ENCODE measurements at regions of chr6 and their contacts with region 1.

Region 1: DNA sequence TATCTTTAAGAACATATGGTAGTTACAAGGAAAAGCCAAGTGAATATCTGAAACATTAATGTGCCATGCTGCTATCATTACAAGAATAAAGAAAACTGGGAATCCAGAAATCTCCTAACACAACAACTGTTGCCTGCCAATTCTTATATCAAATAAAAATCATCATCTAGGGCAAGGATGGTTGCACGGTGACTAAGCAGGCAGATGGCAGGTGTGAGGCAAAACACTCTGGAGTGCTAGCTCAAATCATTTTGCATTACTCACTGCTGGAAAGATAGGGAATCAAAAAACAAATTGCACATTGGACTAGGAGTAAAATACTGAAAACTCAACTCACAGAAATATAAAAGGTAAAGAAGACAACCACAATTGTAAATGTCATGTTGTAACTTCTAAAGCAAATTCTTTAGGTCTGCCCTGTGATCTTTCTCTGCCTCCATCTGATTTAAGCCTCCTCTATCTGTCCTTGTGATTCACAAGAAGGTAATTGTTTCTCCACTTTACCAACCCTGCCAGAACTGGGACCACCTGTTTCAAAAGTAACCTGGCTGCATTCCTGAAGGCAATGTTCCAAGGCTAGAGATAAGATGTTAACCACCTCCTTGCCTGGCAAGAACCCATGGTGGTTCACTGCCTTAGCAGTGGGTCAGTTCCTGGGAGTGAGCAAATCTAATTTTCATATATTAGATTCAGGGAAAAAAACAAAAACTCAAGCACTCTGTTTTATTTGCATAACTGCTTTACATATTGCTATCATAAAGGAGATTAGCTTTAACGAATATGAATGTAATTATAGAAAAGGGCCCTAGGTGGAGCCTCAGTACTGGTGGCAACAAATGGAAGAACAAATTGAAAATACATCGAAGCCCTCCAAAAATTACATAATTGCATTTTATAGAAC is 33.1 kb upstream of the LCA5 start:
- DNase-seq: peak; percentile 72
- ATAC-seq: peak; percentile 86
- H3K4me3 ChIP-seq: no peak overlapping the region
- H3K27ac ChIP-seq: no peak overlapping the region
- H3K4me1 ChIP-seq: no peaks in the 10 kb centered on the region; the same call in 1 of the 2 replicates
- H3K27me3 ChIP-seq: no peaks in the 10 kb centered on the region
- CTCF ChIP-seq: peak; percentile 75
- POLR2A ChIP-seq: no peak
- RAD21 ChIP-seq: peak; percentile 77

Region 2: GRCh38 chr6:79544939-79545450 is 25.4 kb before region 1 on chr6:
- CTCF ChIA-PET with region 1: no interaction called
- POLR2A ChIA-PET with region 1: no interaction called
- dilution Hi-C with region 1: no loop called
- in situ Hi-C with region 1: no loop called
- intact Hi-C with region 1: no loop called
- DNase-seq: peak; percentile 99
- ATAC-seq: peak; percentile 98
- H3K4me3 ChIP-seq: no peak overlapping the region
- H3K27ac ChIP-seq: peak overlapping the region; percentile 30; the same call in 1 of the 2 replicates
- H3K4me1 ChIP-seq: peaks cover 8% of the 10 kb centered on the region
- H3K27me3 ChIP-seq: no peaks in the 10 kb centered on the region
- CTCF ChIP-seq: peak; percentile 63
- POLR2A ChIP-seq: 0 out of 2 replicates have a peak, but pooled peaks have one; percentile 42
- RAD21 ChIP-seq: peak; percentile 59

Region 3: DNA sequence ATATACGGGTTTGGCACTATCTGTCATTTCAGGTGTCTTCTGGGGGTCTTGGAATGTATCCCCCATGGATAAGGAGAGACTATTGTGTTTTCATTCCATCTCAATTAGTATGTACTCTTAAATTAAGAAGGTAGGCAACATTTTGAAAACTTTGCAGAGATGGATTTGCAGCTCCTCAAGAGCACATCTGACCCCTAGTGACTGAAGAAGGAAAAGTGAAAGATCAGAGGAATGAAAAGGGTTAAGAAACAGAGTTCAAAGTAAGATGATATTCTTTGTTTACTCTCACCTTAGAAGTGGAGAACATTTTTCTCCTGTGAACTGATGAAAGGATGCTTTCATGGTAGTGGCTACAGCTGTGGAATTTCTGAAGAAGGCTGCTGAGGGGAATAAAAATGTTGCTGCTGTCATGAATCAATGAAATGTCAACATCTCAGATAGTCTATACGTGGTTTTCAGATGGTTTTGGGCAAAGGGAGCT is 102.3 kb after region 1 on chr6:
- CTCF ChIA-PET with region 1: interaction called, 19 read pairs
- POLR2A ChIA-PET with region 1: no interaction called
- dilution Hi-C with region 1: no loop called
- in situ Hi-C with region 1: loop called (anchors 10 kb)
- intact Hi-C with region 1: loop called (anchors 1 kb)
- DNase-seq: peak; percentile 45
- ATAC-seq: peak; percentile 61
- H3K4me3 ChIP-seq: no peak overlapping the region
- H3K27ac ChIP-seq: no peak overlapping the region
- H3K4me1 ChIP-seq: peaks cover 5% of the 10 kb centered on the region
- H3K27me3 ChIP-seq: no peaks in the 10 kb centered on the region
- CTCF ChIP-seq: peak; percentile 58
- POLR2A ChIP-seq: no peak
- RAD21 ChIP-seq: peak; percentile 73

Region 4: GRCh38 chr6:79713701-79714322 is 143.4 kb after region 1 on chr6:
- CTCF ChIA-PET with region 1: interaction called, 4 read pairs
- POLR2A ChIA-PET with region 1: no interaction called
- dilution Hi-C with region 1: no loop called
- in situ Hi-C with region 1: no loop called
- intact Hi-C with region 1: loop called (anchors 1 kb)
- DNase-seq: peak; percentile 50
- ATAC-seq: peak; percentile 81
- H3K4me3 ChIP-seq: no peak overlapping the region
- H3K27ac ChIP-seq: no peak overlapping the region
- H3K4me1 ChIP-seq: no peaks in the 10 kb centered on the region
- H3K27me3 ChIP-seq: no peaks in the 10 kb centered on the region; the same call in 1 of the 2 replicates
- CTCF ChIP-seq: peak; percentile 65
- POLR2A ChIP-seq: no peak
- RAD21 ChIP-seq: peak; percentile 74

Region 5: GRCh38 chr6:79813854-79814709 is 243.7 kb after region 1 on chr6:
- CTCF ChIA-PET with region 1: no interaction called
- POLR2A ChIA-PET with region 1: no interaction called
- dilution Hi-C with region 1: no loop called
- in situ Hi-C with region 1: no loop called
- intact Hi-C with region 1: loop called (anchors 1 kb)
- DNase-seq: peak; percentile 61
- ATAC-seq: peak; percentile 91
- H3K4me3 ChIP-seq: no peak overlapping the region
- H3K27ac ChIP-seq: no peak overlapping the region
- H3K4me1 ChIP-seq: no peaks in the 10 kb centered on the region
- H3K27me3 ChIP-seq: no peaks in the 10 kb centered on the region
- CTCF ChIP-seq: peak; percentile 78
- POLR2A ChIP-seq: no peak
- RAD21 ChIP-seq: peak; percentile 60

Region 6: DNA sequence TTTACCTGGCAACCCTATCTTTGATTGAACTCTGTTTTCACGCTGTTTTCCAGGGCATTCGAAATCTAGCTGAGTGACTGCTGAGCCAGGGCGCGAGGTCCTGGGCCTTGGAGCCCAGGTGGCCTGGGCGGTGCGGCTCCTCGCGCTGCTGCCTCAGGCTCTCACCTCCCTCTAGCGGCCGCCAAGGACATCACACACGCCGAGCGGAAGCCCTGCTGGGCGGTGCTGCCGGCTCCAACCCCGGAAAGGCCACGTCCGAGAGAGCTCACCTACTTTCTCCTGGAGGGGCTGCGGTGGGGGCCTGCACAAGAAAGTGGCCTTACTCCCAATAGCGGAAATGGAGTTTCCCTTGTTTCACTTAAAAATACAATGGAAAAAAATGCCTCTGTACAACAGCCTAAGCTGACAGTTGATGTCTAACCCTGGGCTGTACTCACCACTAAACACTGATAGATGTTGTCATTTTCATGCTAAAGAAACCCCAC is 299.3 kb after region 1 on chr6:
- CTCF ChIA-PET with region 1: no interaction called
- POLR2A ChIA-PET with region 1: no interaction called
- dilution Hi-C with region 1: no loop called
- in situ Hi-C with region 1: no loop called
- intact Hi-C with region 1: loop called (anchors 2 kb)
- DNase-seq: peak; percentile 57
- ATAC-seq: peak; percentile 100
- H3K4me3 ChIP-seq: no peak overlapping the region
- H3K27ac ChIP-seq: no peak overlapping the region
- H3K4me1 ChIP-seq: no peaks in the 10 kb centered on the region
- H3K27me3 ChIP-seq: peaks cover under 1% of the 10 kb centered on the region
- CTCF ChIP-seq: peak; percentile 79
- POLR2A ChIP-seq: no peak
- RAD21 ChIP-seq: peak; percentile 37

Region 7: GRCh38 chr6:80163658-80164187 is 593.3 kb after region 1 on chr6:
- CTCF ChIA-PET with region 1: no interaction called
- POLR2A ChIA-PET with region 1: no interaction called
- dilution Hi-C with region 1: no loop called
- in situ Hi-C with region 1: no loop called
- intact Hi-C with region 1: no loop called
- DNase-seq: peak; percentile 87
- ATAC-seq: peak; percentile 97
- H3K4me3 ChIP-seq: no peak overlapping the region
- H3K27ac ChIP-seq: peak overlapping the region; percentile 59; the same call in 1 of the 2 replicates
- H3K4me1 ChIP-seq: peaks cover 3% of the 10 kb centered on the region
- H3K27me3 ChIP-seq: no peaks in the 10 kb centered on the region
- CTCF ChIP-seq: no peak
- POLR2A ChIP-seq: no peak
- RAD21 ChIP-seq: no peak